ENCODE measurements at regions of chr1 and their contacts with region 1.

Region 1: GRCh38 chr1:6794164-6794563 is 8.9 kb downstream of the CAMTA1 start:
- DNase-seq: no peak
- ATAC-seq: no peak

Region 2: GRCh38 chr1:6579374-6580118 is 214.6 kb before region 1 on chr1 and contains the start of gene ZBTB48:
- intact Hi-C with region 1: no loop called
- DNase-seq: peak; percentile 100
- ATAC-seq: peak; percentile 97
- total RNA-seq, gene ZBTB48: 11.7 TPM

Region 3: DNA sequence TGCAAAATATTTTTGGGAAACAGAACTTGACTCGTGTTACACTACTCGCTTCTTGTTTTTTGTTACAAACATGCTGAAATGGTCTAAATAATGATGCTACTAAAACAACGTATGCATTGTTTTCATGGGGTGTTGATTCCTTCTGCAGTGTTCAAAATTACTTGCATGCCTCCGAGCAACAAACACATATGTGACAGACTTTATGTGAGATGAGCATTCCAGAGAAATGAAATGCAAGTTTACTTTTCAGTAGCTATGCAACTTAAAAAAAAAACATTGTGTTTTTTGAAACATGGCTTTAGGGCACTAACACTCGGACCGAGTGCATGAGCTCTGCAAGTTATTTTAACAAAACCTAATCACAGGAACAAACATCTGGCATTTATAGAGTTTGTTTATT is 75.9 kb after region 1 on chr1:
- intact Hi-C with region 1: loop called (anchors 10 kb)
- DNase-seq: no peak
- ATAC-seq: no peak

Measured in Right ventricle myocardium superior (tissue), 1 donor.